ENCODE measurements at regions of chr6 and their contacts with region 1.

Region 1: DNA sequence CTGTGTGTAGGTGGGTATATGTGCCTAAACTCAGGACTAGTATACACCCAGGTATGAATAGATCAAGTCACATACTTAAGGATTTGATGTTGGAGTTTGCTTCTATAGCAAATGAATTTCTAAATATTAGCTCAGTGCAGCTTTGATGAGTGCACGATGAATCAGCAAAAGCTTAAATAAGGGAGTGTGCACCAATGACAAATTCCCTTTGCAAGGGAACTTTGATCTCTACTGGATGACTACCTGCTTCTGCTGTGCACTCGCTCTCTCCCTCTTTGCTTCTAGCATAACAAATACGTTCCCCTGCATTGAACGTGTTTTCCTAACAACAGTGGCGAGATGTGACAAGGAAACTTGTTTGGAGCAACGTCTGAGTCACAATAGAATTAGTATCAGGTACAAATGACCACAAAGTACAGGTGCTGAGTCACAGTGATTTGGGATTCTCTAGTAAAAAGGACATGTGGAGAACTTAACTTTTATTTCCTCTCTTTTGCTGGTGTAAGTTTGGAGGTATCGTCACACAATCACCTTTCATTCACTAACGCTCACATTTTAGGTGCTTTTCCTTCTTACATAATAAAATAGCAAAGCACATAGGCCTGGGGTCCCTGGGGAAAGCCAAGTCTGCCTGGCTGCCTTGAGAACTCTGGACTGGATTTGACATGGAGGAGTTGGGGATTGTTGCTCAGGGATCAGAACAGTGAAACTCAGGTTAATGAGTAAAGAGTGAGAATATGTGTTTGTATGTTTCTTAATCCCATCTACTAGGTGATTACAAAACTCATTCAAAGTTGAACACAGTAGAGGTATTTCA is 49.7 kb downstream of the KLHL31 start:
- DNase-seq: peak; percentile 71
- H3K4me3 Mint-ChIP-seq: peak overlapping the region; percentile 73
- H3K27ac Mint-ChIP-seq: peak overlapping the region; percentile 100
- H3K4me1 Mint-ChIP-seq: peaks cover 65% of the 10 kb centered on the region
- H3K27me3 Mint-ChIP-seq: no peaks in the 10 kb centered on the region
- CTCF ChIP-seq: no peak

Region 2: GRCh38 chr6:53544470-53545308 is 71.2 kb before region 1 on chr6 and contains the start of gene GCLC:
- CTCF ChIA-PET with region 1: interaction called, 6 read pairs
- intact Hi-C with region 1: loop called (anchors 2 kb)
- DNase-seq: peak; percentile 94
- H3K4me3 Mint-ChIP-seq: peak within 1 kb of the TSS; percentile 90
- H3K27ac Mint-ChIP-seq: peak within 1 kb of the TSS; percentile 93
- H3K4me1 Mint-ChIP-seq: peaks cover 12% of the 10 kb centered on the region
- H3K27me3 Mint-ChIP-seq: no peaks in the 10 kb centered on the region
- CTCF ChIP-seq: peak; percentile 77
- total RNA-seq, gene GCLC: 45.7 and 45.9 TPM in 2 replicates

Region 3: DNA sequence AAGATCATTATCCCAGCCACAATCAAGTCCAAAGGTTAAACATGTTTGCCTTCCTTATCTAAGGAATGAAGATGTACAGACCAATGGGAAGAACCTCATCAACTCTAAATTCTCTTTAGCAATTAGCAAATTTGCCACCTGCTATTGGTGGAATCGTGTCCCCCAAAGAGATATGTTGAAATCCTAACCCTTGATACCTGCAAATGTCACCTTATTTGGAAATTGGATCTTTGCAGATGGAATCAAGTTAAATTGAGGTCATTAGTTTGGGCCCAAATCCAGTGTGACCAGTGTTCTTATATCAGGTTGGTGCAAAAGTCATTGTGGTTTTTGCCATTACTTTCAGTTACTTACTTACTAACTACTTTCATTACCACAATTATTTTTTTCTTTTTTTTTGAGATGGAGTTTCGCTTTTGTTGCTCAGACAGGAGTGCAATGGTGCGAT is 18.4 kb after region 1 on chr6:
- CTCF ChIA-PET with region 1: no interaction called
- intact Hi-C with region 1: loop called (anchors 2 kb)
- DNase-seq: no peak
- H3K4me3 Mint-ChIP-seq: no peak overlapping the region
- H3K27ac Mint-ChIP-seq: no peak overlapping the region
- H3K4me1 Mint-ChIP-seq: peaks cover 23% of the 10 kb centered on the region
- H3K27me3 Mint-ChIP-seq: no peaks in the 10 kb centered on the region
- CTCF ChIP-seq: no peak

Region 4: DNA sequence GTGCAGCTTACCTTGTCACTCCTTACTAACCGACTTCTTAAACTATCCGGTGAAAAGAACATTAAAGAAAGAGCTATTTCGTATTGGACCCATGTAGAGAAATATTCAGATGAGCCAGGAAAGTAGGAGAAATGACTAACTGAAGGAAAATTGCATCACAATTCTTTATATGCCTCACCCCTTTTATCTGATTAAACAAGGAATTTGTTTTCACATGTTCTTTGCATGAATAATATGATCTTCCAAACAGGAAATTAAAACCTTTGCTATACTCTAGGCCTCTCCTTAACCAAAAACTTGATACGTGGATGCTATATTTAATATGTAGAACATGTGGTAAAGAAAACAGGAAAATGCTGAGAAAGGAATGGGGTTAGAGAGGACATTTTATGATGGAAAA is 137.0 kb after region 1 on chr6:
- CTCF ChIA-PET with region 1: no interaction called
- intact Hi-C with region 1: no loop called
- DNase-seq: no peak
- H3K4me3 Mint-ChIP-seq: no peak overlapping the region
- H3K27ac Mint-ChIP-seq: peak overlapping the region; percentile 25
- H3K4me1 Mint-ChIP-seq: peaks cover 33% of the 10 kb centered on the region
- H3K27me3 Mint-ChIP-seq: no peaks in the 10 kb centered on the region
- CTCF ChIP-seq: no peak